Mammary epithelial cell (primary cell): ENCODE measurements at regions of chr21 and their contacts with region 1.

Region 1: GRCh38 chr21:32687643-32688345 is 40.0 kb downstream of the SYNJ1 start:
- DNase-seq: no peak
- H3K4me3 ChIP-seq: no peak overlapping the region
- H3K27ac ChIP-seq: no peak overlapping the region
- H3K4me1 ChIP-seq: no peaks in the 10 kb centered on the region
- H3K27me3 ChIP-seq: no peaks in the 10 kb centered on the region
- CTCF ChIP-seq: peak in 1 of 2 donors; percentile 3

Region 2: GRCh38 chr21:32826329-32827167 is 138.8 kb after region 1 on chr21:
- CTCF ChIA-PET with region 1: no interaction called
- dilution Hi-C with region 1: no loop called
- in situ Hi-C with region 1: no loop called
- intact Hi-C with region 1: loop called (anchors 1 kb)
- DNase-seq: peak; percentile 38
- H3K4me3 ChIP-seq: no peak overlapping the region
- H3K27ac ChIP-seq: no peak overlapping the region
- H3K4me1 ChIP-seq: no peaks in the 10 kb centered on the region
- H3K27me3 ChIP-seq: no peaks in the 10 kb centered on the region
- CTCF ChIP-seq: peak; percentile 50 to 74